ENCODE measurements at regions of chr11 and their contacts with region 1.

Region 1: GRCh38 chr11:848380-848931 is 5.8 kb downstream of the TSPAN4 start:
- DNase-seq: peak; percentile 89
- H3K4me3 ChIP-seq: peak overlapping the region in 1 of 2 experiments; percentile 26; a peak in 1 of 4 replicates
- H3K27ac ChIP-seq: no peak overlapping the region
- H3K4me1 ChIP-seq: peaks cover 32 to 41% of the 10 kb centered on the region in 2 experiments; a peak in 3 of 4 replicates
- H3K27me3 ChIP-seq: no peaks in the 10 kb centered on the region
- CTCF ChIP-seq: peak; percentile 73
- EP300 ChIP-seq: no peak
- RAD21 ChIP-seq: peak; percentile 79

Region 2: GRCh38 chr11:832321-833113 is 15.9 kb before region 1 on chr11 and contains the start of gene CD151:
- CTCF ChIA-PET with region 1: interaction called, 21 read pairs
- POLR2A ChIA-PET with region 1: interaction called, 9 read pairs
- DNase-seq: peak; percentile 88
- H3K4me3 ChIP-seq: peak within 1 kb of the TSS; percentile 79 to 81
- H3K27ac ChIP-seq: peak within 1 kb of the TSS; percentile 88 to 91
- H3K4me1 ChIP-seq: peaks cover 14 to 34% of the 10 kb centered on the region in 2 experiments; a peak in 2 of 4 replicates
- H3K27me3 ChIP-seq: no peaks in the 10 kb centered on the region
- CTCF ChIP-seq: no peak
- EP300 ChIP-seq: peak in 1 of 2 experiments; percentile 7; a peak in 1 of 4 replicates
- RAD21 ChIP-seq: no peak
- polyA plus RNA-seq, gene CD151: 922 and 1,149 TPM in 2 replicates

Region 3: GRCh38 chr11:859509-860131 is 11.2 kb after region 1 on chr11:
- CTCF ChIA-PET with region 1: interaction called, 24 read pairs
- POLR2A ChIA-PET with region 1: interaction called, 3 read pairs
- DNase-seq: peak; percentile 97
- H3K4me3 ChIP-seq: peak overlapping the region in 1 of 2 experiments; percentile 49; a peak in 3 of 4 replicates
- H3K27ac ChIP-seq: peak overlapping the region; percentile 10 to 79; a peak in 3 of 4 replicates
- H3K4me1 ChIP-seq: peaks cover 10 to 75% of the 10 kb centered on the region in 2 experiments; a peak in 2 of 4 replicates
- H3K27me3 ChIP-seq: no peaks in the 10 kb centered on the region
- CTCF ChIP-seq: no peak
- EP300 ChIP-seq: no peak
- RAD21 ChIP-seq: no peak

Region 4: GRCh38 chr11:890794-891540 is 42.5 kb after region 1 on chr11:
- CTCF ChIA-PET with region 1: interaction called, 17 read pairs
- POLR2A ChIA-PET with region 1: no interaction called
- DNase-seq: peak; percentile 71
- H3K4me3 ChIP-seq: no peak overlapping the region
- H3K27ac ChIP-seq: peak overlapping the region in 1 of 2 experiments; percentile 47; a peak in 1 of 4 replicates
- H3K4me1 ChIP-seq: peaks cover 0 to 24% of the 10 kb centered on the region in 2 experiments; a peak in 1 of 4 replicates
- H3K27me3 ChIP-seq: no peaks in the 10 kb centered on the region
- CTCF ChIP-seq: no peak
- EP300 ChIP-seq: no peak
- RAD21 ChIP-seq: no peak

Region 5: DNA sequence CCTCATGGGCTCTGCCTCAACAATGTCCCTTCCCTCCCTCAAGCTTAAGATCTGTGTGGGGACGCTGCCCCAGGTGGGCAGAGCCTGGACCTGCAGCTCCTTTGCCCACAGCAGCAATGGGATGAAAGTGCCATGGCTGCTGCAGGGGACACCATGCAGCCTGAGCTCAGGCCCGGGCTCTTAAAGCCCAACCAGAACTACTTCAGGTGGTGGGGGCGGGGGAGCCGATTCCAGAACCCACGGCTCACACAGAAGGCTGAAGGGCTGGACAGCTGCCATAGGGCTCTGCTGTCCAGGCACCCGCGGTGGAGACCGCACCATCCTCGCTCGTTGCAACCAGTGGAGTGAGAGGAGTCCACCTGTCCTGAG is 49.7 kb after region 1 on chr11:
- CTCF ChIA-PET with region 1: interaction called, 21 read pairs
- POLR2A ChIA-PET with region 1: no interaction called
- DNase-seq: peak; percentile 70
- H3K4me3 ChIP-seq: no peak overlapping the region
- H3K27ac ChIP-seq: no peak overlapping the region
- H3K4me1 ChIP-seq: no peaks in the 10 kb centered on the region
- H3K27me3 ChIP-seq: no peaks in the 10 kb centered on the region
- CTCF ChIP-seq: peak; percentile 48
- EP300 ChIP-seq: no peak
- RAD21 ChIP-seq: peak; percentile 62

Region 6: DNA sequence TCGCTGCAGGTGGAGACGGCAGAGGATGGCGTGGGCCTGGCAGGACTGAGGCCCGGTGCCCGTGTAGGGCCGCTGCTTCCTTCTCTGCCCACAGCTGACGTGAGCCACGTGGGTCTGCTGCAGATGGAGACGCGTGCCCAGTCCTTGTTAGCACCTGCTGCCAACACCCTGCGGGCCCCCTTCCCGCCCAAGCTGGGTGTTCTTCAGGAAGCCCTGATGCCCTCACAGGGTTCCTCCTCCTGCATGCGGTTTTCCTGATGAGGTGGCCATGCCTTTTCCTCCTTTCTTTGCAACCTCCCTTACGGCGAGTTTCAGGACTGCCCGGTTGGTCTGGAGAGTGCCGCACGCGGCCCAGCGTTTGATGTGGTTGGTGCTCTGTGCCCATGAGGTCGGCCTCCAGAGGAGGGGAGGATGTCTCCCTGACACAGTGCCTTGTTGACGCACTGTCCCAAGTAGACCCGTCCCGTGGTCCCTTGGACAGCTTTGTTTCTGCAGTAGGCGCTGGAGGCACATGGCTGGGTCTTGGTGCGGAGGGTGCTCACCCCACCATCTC is 121.9 kb after region 1 on chr11:
- CTCF ChIA-PET with region 1: interaction called, 10 read pairs
- POLR2A ChIA-PET with region 1: no interaction called
- DNase-seq: no peak
- H3K4me3 ChIP-seq: no peak overlapping the region
- H3K27ac ChIP-seq: no peak overlapping the region
- H3K4me1 ChIP-seq: peaks cover 0 to 26% of the 10 kb centered on the region in 2 experiments; a peak in 1 of 4 replicates
- H3K27me3 ChIP-seq: no peaks in the 10 kb centered on the region
- CTCF ChIP-seq: no peak
- EP300 ChIP-seq: no peak
- RAD21 ChIP-seq: no peak

Region 7: GRCh38 chr11:1041936-1042608 is 193.6 kb after region 1 on chr11:
- CTCF ChIA-PET with region 1: interaction called, 16 read pairs
- POLR2A ChIA-PET with region 1: no interaction called
- DNase-seq: peak; percentile 67
- H3K4me3 ChIP-seq: no peak overlapping the region
- H3K27ac ChIP-seq: no peak overlapping the region
- H3K4me1 ChIP-seq: peaks cover 0 to 7% of the 10 kb centered on the region in 2 experiments; a peak in 1 of 4 replicates
- H3K27me3 ChIP-seq: no peaks in the 10 kb centered on the region; the same call in 1 of the 2 replicates
- CTCF ChIP-seq: no peak
- EP300 ChIP-seq: no peak
- RAD21 ChIP-seq: no peak